ENCODE measurements at regions of chr13 and their contacts with region 1.

Region 1: DNA sequence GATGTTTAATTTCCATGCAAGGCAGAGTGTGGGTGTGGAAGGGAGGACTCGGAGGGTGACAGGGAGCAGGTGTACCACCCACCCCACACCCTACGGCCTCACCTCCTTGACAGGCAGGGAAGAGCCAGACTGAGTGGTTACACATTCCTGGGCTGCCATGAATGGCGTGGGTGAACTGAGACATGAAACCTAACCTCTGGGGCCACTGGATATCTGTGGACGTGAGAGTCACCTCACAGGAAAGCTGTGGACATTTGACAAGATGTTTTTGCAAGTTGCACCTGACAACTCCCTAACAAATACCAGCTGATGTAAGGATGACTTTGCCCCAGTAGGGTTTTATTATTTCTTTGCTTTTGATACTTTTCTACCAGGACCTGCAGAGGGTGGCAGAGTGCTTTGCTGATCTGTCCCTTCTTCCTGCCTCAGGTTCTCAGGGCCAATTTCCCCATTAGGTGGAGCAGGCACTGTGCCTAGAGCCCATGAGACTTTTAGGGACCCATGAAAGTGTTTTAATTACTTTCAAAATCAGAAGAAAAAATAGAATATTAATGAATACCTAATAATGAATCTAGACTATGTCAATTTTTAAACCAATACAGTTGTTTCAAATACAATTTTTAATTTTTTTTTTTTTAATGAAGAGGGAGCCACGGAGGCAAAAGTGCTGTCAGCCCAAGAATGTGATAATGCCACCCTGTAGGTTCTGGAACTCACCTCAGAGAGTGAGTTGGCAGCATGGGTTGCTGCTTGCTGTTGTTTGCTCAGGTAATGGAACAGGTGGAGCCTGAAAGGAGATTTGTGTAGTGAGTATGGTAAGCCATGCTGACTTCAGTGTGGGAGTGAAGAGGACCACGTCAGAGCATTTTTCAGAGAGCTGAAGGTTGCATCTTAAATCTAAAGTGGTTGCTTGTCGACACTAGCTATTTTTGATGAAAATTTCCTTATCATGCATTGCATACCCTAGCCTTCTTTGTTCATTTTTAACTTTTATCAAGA is 58.0 kb upstream of the CYSLTR2 start:
- DNase-seq: peak; percentile 68
- H3K4me3 ChIP-seq: no peak overlapping the region
- H3K27ac ChIP-seq: no peak overlapping the region
- H3K4me1 ChIP-seq: no peaks in the 10 kb centered on the region
- H3K27me3 ChIP-seq: no peaks in the 10 kb centered on the region
- CTCF ChIP-seq: peak; percentile 63

Region 2: GRCh38 chr13:46633416-46633815 is 1962.3 kb before region 1 on chr13:
- intact Hi-C with region 1: no loop called
- DNase-seq: no peak
- H3K4me3 ChIP-seq: no peak overlapping the region
- H3K27ac ChIP-seq: no peak overlapping the region
- H3K4me1 ChIP-seq: no peaks in the 10 kb centered on the region
- H3K27me3 ChIP-seq: no peaks in the 10 kb centered on the region
- CTCF ChIP-seq: no peak

Region 3: GRCh38 chr13:48477191-48477855 is 118.4 kb before region 1 on chr13:
- intact Hi-C with region 1: no loop called
- DNase-seq: no peak
- H3K4me3 ChIP-seq: no peak overlapping the region
- H3K27ac ChIP-seq: peak overlapping the region; percentile 23
- H3K4me1 ChIP-seq: no peaks in the 10 kb centered on the region
- H3K27me3 ChIP-seq: no peaks in the 10 kb centered on the region
- CTCF ChIP-seq: no peak

Region 4: GRCh38 chr13:48647630-48648029 is 51.9 kb after region 1 on chr13:
- intact Hi-C with region 1: loop called (anchors 5 kb)
- DNase-seq: no peak
- H3K4me3 ChIP-seq: no peak overlapping the region
- H3K27ac ChIP-seq: no peak overlapping the region
- H3K4me1 ChIP-seq: no peaks in the 10 kb centered on the region
- H3K27me3 ChIP-seq: no peaks in the 10 kb centered on the region
- CTCF ChIP-seq: peak; percentile 20

Region 5: DNA sequence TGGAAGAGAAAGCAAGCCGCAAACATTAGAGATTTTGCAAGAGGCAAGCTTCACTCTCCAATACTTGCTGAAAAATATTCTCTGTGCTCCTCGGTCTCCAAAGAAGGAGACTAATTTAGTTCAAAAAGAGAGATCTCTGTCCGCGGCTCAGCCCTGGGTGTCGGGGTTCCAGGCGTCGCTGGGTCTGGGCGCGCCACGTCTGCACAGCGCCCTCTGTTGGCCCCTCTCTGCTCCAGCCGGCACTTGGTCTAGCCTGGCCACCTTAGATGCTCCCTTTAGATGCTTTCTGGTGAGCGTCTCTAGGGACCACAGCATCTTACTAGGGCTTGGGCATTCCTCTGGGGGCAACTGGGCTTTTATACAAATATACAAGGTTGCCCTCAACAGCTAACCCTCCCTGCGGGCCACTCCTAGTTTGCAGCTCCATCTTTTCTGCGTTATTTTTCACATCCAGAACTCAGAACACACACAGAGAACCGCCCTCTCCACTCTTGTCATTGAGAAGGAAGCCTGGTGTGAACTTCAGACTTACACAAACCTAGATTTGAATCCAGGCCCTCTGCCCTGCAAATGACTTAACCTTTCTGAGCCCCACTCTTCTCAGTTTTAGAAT is 136.3 kb after region 1 on chr13:
- intact Hi-C with region 1: loop called (anchors 2 kb)
- DNase-seq: peak; percentile 56
- H3K4me3 ChIP-seq: no peak overlapping the region
- H3K27ac ChIP-seq: no peak overlapping the region
- H3K4me1 ChIP-seq: no peaks in the 10 kb centered on the region
- H3K27me3 ChIP-seq: no peaks in the 10 kb centered on the region
- CTCF ChIP-seq: peak; percentile 66

Region 6: GRCh38 chr13:48769107-48769704 is 173.5 kb after region 1 on chr13:
- intact Hi-C with region 1: loop called (anchors 2 kb)
- DNase-seq: peak; percentile 93
- H3K4me3 ChIP-seq: no peak overlapping the region
- H3K27ac ChIP-seq: no peak overlapping the region
- H3K4me1 ChIP-seq: no peaks in the 10 kb centered on the region
- H3K27me3 ChIP-seq: no peaks in the 10 kb centered on the region
- CTCF ChIP-seq: peak; percentile 97

Measured in colonic mucosa (tissue), 4 donors.